Activated T-helper 1 cell treated with anti-CD3 and anti-CD28 coated beads, Interleukin-12 subunit alpha, Interleukin-12 subunit beta, Interleukin-2, Interleukin-4 antibody, amounts not matched to agents 30 ng/mL and 10 ng/mL and 1 ng/mL, durations not matched to agents 14 hours and 24 hours and 36 hours (primary cell): ENCODE measurements at regions of chr19 and their contacts with region 1.

Region 1: DNA sequence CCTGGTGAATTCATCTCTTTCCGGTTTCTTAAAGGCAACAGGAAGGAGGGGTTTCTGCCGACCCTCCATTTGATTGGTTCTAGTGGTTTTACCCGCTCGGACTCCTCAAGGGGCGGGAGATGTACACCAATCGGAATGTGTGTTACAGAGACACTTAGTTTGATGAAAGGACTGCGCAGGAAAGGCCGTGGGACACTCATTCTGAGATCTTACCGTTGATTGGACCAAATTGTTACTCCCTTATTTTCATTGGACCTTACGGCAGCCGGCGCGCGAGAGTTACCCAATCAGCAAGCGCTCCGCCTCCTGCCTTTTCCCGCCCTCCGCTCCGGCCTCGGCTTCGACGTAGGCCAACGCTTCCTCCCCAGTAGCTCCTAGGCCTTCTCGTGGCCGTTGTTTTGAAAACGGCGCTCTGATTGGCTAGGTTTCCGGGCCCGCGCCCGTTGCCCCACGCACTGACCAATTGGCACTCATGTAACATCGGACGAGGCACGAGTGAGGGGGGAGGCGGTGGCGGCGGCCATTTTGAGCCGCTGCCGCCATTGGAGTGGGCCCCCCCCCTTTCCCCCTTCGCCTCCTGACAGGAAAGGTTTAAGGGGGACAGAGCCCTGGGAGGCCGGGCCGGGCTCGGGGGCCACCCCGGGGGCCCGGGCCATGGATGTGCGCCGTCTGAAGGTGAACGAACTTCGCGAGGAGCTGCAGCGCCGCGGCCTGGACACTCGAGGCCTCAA is at the start of gene HNRNPUL1:
- DNase-seq: peak; percentile 99
- H3K4me3 Mint-ChIP-seq: peak within 1 kb of the TSS; percentile 94
- H3K27ac Mint-ChIP-seq: peak within 1 kb of the TSS; percentile 99
- H3K4me1 Mint-ChIP-seq: peaks cover 52% of the 10 kb centered on the region
- H3K27me3 Mint-ChIP-seq: no peaks in the 10 kb centered on the region
- total RNA-seq, gene HNRNPUL1: 254 and 264 TPM in 2 replicates

Region 2: DNA sequence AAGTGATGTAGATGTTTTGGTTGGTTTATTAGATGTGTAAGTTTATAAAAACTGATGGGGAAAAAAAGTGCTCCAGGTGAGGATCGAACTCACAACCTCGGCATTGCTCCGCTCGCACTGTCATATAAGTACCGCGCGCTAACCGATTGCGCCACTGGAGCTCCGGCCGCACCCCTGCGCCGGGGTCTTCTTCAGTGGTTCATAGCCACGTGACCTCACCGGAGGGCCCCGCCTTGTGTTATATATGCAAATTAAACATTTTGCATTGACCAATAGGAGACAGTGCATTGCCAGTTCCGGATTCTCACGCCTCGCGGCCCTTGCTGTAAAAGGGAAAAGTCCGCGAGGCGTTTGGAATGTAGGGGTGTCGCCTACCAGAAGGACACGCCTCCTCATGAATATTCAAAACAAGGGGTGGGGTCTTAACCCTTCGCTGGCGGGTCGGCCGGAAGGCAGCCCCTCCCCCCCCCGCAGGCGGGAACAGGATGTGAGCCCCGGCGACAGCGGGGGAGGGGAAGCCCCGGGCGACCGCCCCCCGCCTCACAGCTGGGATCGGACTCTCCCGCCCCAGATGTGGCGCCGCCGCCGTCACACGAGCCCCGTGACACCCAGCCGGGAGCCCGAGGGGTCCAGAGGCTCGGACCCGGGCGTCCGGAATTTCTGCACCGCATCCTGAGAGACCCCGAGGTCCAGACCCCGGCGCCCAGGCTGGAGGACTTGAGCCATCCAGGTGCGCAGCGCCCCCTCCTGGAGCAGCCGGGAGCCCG is 1851.7 kb before region 1 on chr19 and contains the start of gene PLEKHG2:
- intact Hi-C with region 1: loop called (anchors 5 kb)
- DNase-seq: peak; percentile 95
- H3K4me3 Mint-ChIP-seq: peak within 1 kb of the TSS; percentile 96
- H3K27ac Mint-ChIP-seq: peak within 1 kb of the TSS; percentile 86
- H3K4me1 Mint-ChIP-seq: peaks cover 46% of the 10 kb centered on the region
- H3K27me3 Mint-ChIP-seq: no peaks in the 10 kb centered on the region
- total RNA-seq, gene PLEKHG2: 43.9 and 47.3 TPM in 2 replicates

Region 3: DNA sequence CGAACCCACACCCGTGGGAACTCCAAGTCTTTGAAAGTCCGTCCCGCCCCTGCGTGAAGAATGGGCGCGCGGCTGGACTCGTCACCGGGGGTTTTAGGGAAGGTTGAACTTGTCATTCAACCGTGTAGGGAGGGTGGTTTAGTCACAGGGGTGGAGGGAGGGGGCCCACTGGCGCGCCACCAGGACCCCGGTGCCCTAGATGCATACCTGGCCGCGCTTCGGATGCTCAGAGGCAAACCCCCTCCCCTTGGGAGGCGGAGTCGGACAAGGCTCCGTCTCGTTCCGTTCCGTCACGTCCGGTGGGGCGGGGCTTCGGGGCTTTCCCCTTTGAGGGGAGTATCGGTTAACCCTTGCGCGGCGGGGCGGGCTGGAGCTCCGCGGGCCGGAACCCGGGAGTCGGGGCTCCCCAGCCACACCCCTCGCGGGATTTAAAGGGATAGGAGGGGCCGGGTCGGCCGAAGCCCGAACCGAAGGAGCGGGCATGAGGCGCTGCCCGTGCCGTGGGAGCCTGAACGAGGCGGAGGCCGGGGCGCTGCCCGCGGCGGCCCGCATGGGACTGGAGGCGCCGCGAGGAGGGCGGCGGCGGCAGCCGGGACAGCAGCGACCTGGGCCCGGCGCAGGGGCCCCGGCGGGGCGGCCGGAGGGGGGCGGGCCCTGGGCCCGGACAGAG is 547.2 kb before region 1 on chr19 and contains the starts of genes COQ8B and ITPKC:
- intact Hi-C with region 1: loop called (anchors 1 kb)
- DNase-seq: peak; percentile 100
- H3K4me3 Mint-ChIP-seq: peak within 1 kb of the TSS; percentile 97
- H3K27ac Mint-ChIP-seq: peak within 1 kb of the TSS; percentile 95
- H3K4me1 Mint-ChIP-seq: peaks cover 44% of the 10 kb centered on the region
- H3K27me3 Mint-ChIP-seq: no peaks in the 10 kb centered on the region
- total RNA-seq, gene COQ8B: 38.4 and 41.6 TPM in 2 replicates
- total RNA-seq, gene ITPKC: 8.7 and 9.9 TPM in 2 replicates

Region 4: DNA sequence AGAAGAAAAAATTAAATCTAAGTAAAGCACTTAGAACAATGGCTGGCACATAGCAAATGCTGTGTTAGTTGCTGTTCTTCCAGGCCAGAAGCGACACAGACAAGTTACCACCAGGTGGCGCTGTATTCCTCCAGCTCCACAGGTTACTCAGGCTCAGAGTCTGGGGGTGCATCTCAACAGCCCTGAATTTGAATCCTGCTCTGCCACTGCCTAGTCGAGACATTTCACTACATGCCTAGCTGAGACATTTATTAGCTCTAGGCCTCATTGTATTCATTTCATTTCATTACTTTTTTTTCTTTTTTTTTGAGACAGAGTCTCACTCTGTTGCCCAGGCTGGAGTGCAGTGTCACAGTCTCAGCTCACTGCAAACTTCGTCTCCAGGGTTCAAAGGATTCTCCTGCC is 289.4 kb before region 1 on chr19:
- intact Hi-C with region 1: loop called (anchors 5 kb)
- DNase-seq: peak; percentile 62
- H3K4me3 Mint-ChIP-seq: peak overlapping the region; percentile 24
- H3K27ac Mint-ChIP-seq: no peak overlapping the region
- H3K4me1 Mint-ChIP-seq: peaks cover 48% of the 10 kb centered on the region
- H3K27me3 Mint-ChIP-seq: peaks cover 4% of the 10 kb centered on the region

Region 5: DNA sequence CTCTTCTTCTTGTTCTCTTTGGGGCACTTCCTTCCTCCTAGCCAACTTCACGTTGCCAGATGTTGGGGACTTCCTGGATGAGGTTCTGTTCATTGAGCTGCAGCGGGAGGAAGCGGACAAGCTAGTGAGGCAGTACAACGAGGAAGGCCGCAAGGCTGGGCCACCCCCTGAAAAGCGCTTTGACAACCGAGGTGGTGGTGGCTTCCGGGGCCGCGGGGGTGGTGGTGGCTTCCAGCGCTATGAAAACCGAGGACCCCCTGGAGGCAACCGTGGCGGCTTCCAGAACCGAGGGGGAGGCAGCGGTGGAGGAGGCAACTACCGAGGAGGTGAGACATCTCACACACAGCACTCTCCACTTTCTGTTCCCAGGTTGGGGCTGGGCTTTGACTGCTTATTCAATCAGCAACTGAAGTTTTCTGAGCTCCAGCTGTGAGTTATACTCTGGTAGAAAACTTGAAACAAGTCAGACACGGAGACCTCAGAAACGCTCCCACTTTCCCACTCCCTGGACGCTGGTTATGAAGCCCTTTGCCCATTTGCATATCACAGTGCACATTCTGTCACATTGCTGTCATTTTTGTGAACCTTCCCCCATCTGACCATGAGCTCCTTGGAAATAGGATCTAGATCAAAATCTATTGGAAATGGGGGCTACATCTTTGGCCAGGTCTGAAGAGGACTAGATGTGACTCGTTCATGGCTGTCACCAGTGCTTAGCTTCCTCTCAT is 38.8 kb after region 1 on chr19:
- intact Hi-C with region 1: loop called (anchors 1 kb)
- DNase-seq: peak; percentile 58
- H3K4me3 Mint-ChIP-seq: peak overlapping the region; percentile 80
- H3K27ac Mint-ChIP-seq: peak overlapping the region; percentile 100
- H3K4me1 Mint-ChIP-seq: peaks cover 90% of the 10 kb centered on the region
- H3K27me3 Mint-ChIP-seq: no peaks in the 10 kb centered on the region

Region 6: DNA sequence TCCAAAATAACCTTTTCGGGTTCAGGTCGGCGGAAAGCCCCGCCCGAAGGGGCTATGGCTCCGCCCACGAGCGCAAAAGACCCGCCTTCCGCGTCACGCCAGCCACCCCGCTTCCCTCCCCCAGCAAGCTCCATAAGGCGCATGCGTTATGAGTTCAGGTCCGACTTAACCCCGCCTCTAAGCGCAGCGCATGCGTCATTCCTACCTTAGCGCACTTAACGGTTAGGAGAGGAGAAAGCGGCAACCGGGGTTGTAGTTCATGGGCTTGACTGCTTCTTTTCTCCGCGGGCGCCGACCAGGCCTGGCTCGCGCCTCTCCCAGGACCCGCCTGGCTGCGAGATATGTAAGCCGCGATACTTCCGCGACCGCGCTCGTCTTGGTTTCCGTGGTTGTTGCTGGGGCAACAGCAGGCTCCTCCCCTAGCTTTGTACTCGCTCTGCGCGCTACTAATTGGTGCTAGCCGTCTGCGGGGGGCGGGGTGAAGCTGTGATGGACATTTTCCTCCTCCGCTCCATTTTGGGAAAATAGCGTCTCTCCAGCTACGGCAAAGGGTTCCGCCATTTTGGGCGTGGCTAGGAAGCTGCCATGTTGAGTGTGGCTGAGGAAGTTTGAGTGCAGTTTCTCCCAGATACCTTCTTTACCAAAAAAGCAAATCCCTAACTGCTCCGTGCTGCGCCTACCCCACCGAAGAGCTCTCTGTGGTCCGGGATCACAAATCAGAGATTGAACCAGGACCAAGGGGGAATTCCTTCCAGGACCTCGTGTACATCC is 99.9 kb after region 1 on chr19 and contains the start of gene B9D2:
- intact Hi-C with region 1: loop called (anchors 1 kb)
- DNase-seq: peak; percentile 97
- H3K4me3 Mint-ChIP-seq: peak within 1 kb of the TSS; percentile 88
- H3K27ac Mint-ChIP-seq: peak within 1 kb of the TSS; percentile 98
- H3K4me1 Mint-ChIP-seq: peaks cover 30% of the 10 kb centered on the region
- H3K27me3 Mint-ChIP-seq: no peaks in the 10 kb centered on the region
- total RNA-seq, gene B9D2: 4.4 and 4.5 TPM in 2 replicates

Region 7: DNA sequence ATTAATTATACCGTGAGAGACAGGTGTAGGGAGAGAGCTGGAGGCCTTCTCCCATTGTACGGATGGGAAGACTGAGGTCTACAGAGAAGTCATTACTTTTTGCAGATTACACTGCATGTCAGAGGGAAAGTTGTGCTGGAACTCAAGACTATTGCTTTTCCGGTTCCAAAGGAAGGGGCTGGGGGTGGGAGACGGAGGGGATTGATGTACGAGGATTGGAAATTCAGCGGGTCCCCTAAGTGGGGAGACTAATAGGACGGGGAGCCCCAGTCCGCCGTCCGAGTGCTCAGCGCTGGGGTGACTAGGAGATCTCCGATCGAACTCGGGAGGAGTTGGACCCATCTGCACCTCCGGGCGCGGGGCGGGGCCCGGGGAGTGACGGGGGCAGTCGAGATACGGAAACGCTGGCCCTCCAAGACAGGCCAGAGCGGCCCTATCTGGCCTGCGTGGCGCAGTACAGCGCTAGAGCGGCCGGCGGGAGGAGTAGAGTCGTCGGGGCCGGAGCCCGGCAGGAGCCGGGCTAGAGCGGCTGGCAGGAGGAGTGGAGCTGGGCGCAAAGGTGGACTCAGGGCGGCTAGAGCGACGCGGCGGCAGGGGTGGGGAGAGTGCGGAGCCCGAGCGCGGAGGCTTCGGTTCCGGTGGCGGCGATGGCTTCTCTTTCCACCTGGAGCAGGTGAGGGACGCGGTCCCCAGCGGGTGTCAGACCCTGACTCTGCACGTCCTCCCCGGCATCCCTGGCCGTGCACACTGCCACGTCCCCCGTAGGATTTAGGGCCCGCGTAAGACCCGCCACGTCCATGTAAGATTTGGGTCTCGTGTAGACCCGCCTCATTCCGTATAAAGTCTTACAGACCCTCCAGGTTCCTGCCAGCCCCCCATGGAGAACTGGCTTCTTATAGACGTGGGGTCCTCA is 620.1 kb after region 1 on chr19:
- intact Hi-C with region 1: loop called (anchors 10 kb)
- DNase-seq: peak; percentile 89
- H3K4me3 Mint-ChIP-seq: peak overlapping the region; percentile 81
- H3K27ac Mint-ChIP-seq: peak overlapping the region; percentile 96
- H3K4me1 Mint-ChIP-seq: peaks cover 56% of the 10 kb centered on the region
- H3K27me3 Mint-ChIP-seq: no peaks in the 10 kb centered on the region